ENCODE measurements at regions of chr3 and their contacts with region 1.

Region 1: DNA sequence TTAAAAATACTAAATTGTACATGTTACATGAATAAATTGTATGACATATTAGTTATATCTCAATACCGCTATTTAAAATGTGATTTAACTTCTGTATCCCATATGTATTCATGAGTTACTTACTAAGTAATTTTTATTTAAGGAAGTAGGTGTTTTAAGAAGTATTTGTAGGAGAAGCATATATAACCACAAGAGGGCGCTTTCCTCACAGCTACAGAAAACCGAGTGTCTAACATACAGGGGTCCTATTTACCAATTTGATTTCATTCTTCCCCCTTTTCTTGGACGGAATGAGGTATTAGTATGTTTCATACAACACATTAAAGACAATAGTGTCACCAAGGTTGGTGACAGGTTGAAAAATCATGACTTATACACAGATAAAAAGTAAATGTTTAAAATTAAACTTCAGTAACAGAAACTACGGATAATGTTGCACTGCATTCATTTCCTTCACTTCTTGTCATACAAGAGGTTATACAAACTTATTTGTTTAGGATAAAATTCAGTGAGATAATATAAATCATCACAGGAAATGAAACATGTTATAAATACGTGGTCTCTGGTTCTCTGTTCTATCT is 253.6 kb downstream of the MAGI1 start:
- DNase-seq: no peak
- ATAC-seq: no peak
- H3K4me3 Mint-ChIP-seq: no peak overlapping the region
- H3K27ac Mint-ChIP-seq: no peak overlapping the region
- H3K4me1 Mint-ChIP-seq: no peaks in the 10 kb centered on the region
- H3K27me3 Mint-ChIP-seq: no peaks in the 10 kb centered on the region

Region 2: DNA sequence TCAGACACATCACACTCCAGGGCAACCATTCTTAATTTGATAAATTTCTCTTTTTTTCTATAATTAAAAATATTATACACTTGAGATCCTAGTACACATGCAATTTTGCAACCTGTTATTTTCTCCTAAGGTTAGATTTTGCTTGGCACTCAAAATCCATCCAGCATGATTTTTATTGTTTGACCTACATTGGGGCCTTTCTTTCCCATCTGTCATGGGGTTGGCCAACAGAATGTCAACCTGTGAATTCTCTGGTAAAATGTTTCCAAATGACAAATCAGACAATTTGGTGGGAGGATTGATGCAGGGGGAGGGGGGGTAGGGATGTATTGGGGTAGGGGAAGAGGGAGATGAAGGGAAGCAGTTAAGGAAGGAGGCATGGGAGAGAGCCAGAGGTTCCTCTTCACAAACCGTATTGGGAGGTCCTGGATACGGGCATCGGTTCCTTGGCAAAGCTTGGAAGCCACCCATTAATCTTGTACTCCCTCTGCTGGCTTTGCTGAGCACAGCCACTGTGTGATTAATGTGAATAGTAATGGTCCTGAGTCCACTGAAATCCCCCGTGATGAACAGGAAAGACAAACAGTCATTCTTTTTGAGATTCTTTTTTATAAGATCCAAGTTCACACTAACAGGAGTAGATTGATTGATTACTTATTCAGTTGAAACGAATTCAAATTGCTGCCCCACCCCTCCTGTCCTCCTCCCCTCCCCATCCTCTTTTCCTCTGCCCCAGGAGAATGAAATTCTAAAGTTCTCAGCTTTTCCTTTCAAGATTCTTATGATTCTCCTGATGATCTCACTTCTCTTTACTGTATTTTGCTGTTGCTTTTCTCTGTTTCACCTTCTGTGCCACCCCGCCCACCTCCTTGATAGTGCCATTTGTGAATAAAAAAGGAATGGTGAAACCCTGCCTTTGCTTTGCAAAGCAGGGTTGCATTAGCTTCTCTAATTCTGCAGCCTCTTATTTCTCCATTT is 353.5 kb after region 1 on chr3:
- CTCF ChIA-PET with region 1: no interaction called
- POLR2A ChIA-PET with region 1: no interaction called
- intact Hi-C with region 1: loop called (anchors 1 to 10 kb)
- DNase-seq: peak; percentile 47
- ATAC-seq: peak; percentile 63
- H3K4me3 Mint-ChIP-seq: no peak overlapping the region
- H3K27ac Mint-ChIP-seq: no peak overlapping the region
- H3K4me1 Mint-ChIP-seq: no peaks in the 10 kb centered on the region
- H3K27me3 Mint-ChIP-seq: peaks cover 14% of the 10 kb centered on the region

Region 3: DNA sequence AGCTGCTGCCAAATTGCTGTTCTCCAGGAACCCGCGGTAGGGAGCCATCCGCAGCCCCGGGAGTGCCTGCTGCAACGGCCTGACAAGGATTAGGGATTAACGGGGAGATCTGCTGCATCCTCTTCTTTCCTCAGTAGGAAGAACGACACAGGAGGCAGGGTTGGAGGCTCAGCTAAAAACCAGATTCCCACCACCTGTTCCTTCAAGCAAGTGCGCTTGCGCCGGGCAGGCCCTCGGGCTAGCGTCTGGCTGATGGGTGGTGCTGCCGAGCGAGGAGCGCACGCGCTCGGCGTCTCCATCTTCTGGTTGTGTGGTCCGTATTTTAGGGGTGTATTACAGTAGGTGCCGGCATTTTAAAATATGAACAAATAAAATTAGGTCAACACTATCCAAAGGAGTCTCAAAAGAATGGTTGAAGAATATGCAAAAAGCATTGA is 410.2 kb after region 1 on chr3:
- CTCF ChIA-PET with region 1: no interaction called
- POLR2A ChIA-PET with region 1: no interaction called
- intact Hi-C with region 1: loop called (anchors 2 to 5 kb)
- DNase-seq: peak; percentile 54
- ATAC-seq: peak; percentile 36
- H3K4me3 Mint-ChIP-seq: no peak overlapping the region
- H3K27ac Mint-ChIP-seq: no peak overlapping the region
- H3K4me1 Mint-ChIP-seq: peaks cover 4% of the 10 kb centered on the region
- H3K27me3 Mint-ChIP-seq: peaks cover 37% of the 10 kb centered on the region

Measured in activated CD4-positive, alpha-beta T cell treated with anti-CD3 and anti-CD28 coated beads for 36 hours (primary cell).